ENCODE measurements at regions of chr15 and their contacts with region 1.

Region 1: DNA sequence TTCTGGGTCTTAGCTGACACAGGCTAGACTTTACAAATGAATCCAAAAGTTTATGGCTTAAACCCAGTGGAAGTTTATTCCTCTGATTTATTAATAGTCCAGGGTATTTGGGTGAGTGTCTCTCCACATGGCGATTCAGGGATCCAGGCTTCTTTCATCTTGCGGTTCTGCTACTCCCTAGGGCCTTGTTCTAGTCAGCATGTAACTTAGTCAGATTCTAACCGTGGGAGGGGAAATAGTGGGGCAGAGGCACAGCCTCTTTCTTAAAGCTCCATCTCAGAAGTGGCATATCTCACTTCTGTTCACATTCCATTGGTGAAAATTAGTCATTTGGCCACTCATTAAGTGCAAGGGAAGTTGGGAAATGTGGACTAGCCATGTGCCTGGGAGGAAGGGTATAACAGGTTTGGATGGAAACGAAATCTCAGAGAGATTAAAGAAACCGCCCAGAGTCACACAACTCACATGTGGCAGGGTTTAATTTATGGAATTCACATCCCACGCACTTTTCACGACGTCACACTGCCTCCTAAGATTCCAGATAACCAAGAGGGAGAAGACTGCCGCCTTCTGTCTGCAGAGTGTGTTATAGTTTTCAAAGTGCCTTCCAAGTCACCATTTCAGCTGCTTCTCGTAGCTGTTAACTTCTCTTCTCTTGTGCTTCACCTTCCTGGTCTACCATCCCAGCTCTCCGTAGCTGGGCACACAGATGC is 11.4 kb upstream of the RASGRF1 start:
- DNase-seq: no peak
- H3K4me3 ChIP-seq: no peak overlapping the region
- H3K27ac ChIP-seq: no peak overlapping the region
- H3K27me3 ChIP-seq: peaks cover 0 to 9% (median 0%) of the 10 kb centered on the region in 45 donors
- CTCF ChIP-seq: peak in 1 of 56 donors; percentile 14

Region 2: DNA sequence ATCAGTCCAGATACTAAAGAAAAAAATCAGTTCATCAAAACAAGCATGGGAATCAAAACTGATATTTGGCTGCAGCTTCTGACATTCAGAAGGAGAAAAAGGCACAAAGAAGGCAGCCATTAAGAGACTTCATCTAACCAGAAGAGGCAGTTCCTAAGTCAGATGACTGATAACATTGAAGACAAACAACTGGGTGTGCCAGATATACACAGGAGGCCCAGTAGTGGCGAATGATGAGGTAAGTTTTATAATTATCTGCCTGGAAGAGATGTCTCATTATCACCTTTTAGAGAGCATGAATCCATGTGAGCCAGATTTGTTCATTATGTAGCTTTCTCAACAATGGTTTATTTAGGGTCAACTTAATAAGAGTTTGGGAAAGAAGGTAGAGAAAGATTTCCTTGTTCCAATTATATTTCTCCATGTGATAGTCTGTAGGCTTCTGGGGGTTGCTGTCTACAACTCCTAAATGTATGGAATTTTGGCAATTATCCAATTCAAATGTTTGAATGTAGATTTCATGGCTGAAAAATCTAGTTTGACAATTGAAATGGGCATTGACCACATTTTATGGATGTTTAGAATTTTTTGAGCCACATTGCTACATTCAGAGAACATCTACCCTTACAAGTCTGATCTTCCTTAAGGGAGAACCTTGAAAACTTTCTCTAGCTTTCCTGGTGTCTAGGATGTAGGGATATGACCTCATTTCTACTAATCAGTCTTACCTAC is 39.0 kb after region 1 on chr15:
- intact Hi-C with region 1: no loop called
- DNase-seq: no peak
- H3K4me3 ChIP-seq: no peak overlapping the region
- H3K27ac ChIP-seq: no peak overlapping the region
- H3K27me3 ChIP-seq: no peaks in the 10 kb centered on the region
- CTCF ChIP-seq: no peak

Region 3: DNA sequence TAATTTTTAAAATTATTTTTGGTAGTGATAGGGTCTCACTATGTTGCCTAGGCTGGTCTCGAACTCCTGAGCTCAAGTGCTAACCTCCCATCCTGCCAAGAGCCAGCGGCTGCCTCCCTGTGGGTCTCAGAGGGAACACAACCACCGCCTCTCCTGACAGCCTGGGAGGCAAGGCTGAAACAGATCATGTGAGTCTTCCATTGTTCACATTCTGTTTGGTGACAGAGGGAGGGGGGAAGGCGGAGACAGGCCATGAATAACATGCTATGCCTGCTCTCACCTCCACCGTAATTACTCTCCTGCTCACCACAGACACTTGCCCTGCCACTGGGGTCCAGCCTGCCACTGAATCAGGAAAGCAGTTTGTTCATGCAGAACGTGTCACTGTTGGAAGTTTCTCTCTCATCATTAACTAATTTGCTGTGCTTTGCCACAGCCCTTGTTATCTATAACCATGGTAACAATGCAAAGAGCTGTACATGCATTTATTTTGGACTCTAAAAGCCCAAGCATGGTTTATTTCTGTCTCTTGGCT is 67.0 kb after region 1 on chr15:
- intact Hi-C with region 1: loop called in 1 of 2 experiments (anchors 5 kb)
- DNase-seq: peak in 8 of 10 donors; percentile 50 to 76 (median 60)
- H3K4me3 ChIP-seq: no peak overlapping the region
- H3K27ac ChIP-seq: peak overlapping the region in 46 of 59 donors; percentile 1 to 75 (median 50)
- H3K27me3 ChIP-seq: no peaks in the 10 kb centered on the region
- CTCF ChIP-seq: peak in 41 of 56 donors; percentile 4 to 60 (median 31)